ENCODE measurements at regions of chr4 and their contacts with region 1.

Region 1: DNA sequence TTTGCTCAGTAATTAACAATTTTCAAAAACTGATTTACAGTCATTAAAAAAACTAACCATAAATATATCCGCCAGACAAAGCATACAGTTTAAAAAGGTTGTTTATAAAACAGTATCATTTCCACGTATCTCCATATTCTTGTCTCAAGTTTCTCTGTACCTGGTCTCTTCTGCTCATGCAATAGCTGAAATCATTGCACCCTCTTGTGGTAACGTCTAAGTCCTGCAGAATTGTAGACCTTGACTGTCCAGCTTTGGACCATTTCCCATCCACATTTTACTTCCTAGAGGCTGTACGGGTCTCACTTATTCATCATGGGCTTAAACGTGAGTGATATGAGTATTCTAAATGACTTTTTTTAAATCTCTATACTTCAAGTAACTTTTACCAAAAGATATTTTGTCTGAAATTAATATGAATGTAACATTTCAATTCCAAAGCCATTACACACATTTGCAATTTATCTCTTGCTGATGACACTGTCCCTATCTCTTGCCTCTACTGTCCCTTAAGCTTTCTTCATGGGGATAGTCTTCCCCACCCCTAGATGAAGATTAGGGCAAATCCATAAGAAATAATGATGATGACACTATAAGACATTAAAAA is 118.5 kb downstream of the BTC start:
- DNase-seq: peak; percentile 32 to 71 (median 40)
- ATAC-seq: peak; percentile 74
- H3K4me3 ChIP-seq: no peak overlapping the region
- H3K27ac ChIP-seq: no peak overlapping the region
- H3K4me1 ChIP-seq: no peaks in the 10 kb centered on the region
- H3K27me3 ChIP-seq: no peaks in the 10 kb centered on the region
- CTCF ChIP-seq: peak; percentile 42 to 83 (median 75)
- POLR2A ChIP-seq: no peak

Region 2: GRCh38 chr4:74320559-74321118 is 355.1 kb before region 1 on chr4:
- intact Hi-C with region 1: loop called (anchors 5 kb)
- DNase-seq: peak; percentile 13 to 60 (median 44)
- ATAC-seq: peak; percentile 63
- H3K4me3 ChIP-seq: no peak overlapping the region
- H3K27ac ChIP-seq: no peak overlapping the region
- H3K4me1 ChIP-seq: no peaks in the 10 kb centered on the region
- H3K27me3 ChIP-seq: no peaks in the 10 kb centered on the region
- CTCF ChIP-seq: peak in 6 of 7 experiments; percentile 23 to 62 (median 49)
- POLR2A ChIP-seq: no peak

Region 3: GRCh38 chr4:74376888-74377483 is 298.8 kb before region 1 on chr4:
- intact Hi-C with region 1: loop called (anchors 5 kb)
- DNase-seq: no peak
- ATAC-seq: no peak
- H3K4me3 ChIP-seq: no peak overlapping the region
- H3K27ac ChIP-seq: no peak overlapping the region
- H3K4me1 ChIP-seq: no peaks in the 10 kb centered on the region
- H3K27me3 ChIP-seq: no peaks in the 10 kb centered on the region
- CTCF ChIP-seq: peak; percentile 34 to 70 (median 65)
- POLR2A ChIP-seq: no peak

Region 4: GRCh38 chr4:74543231-74543670 is 132.5 kb before region 1 on chr4:
- intact Hi-C with region 1: no loop called
- DNase-seq: no peak
- ATAC-seq: no peak
- H3K4me3 ChIP-seq: no peak overlapping the region
- H3K27ac ChIP-seq: no peak overlapping the region
- H3K4me1 ChIP-seq: peaks cover 17% of the 10 kb centered on the region
- H3K27me3 ChIP-seq: no peaks in the 10 kb centered on the region
- CTCF ChIP-seq: no peak
- POLR2A ChIP-seq: no peak